SK-N-SH (cell line): ENCODE measurements at regions of chr2 and their contacts with region 1.

Region 1: DNA sequence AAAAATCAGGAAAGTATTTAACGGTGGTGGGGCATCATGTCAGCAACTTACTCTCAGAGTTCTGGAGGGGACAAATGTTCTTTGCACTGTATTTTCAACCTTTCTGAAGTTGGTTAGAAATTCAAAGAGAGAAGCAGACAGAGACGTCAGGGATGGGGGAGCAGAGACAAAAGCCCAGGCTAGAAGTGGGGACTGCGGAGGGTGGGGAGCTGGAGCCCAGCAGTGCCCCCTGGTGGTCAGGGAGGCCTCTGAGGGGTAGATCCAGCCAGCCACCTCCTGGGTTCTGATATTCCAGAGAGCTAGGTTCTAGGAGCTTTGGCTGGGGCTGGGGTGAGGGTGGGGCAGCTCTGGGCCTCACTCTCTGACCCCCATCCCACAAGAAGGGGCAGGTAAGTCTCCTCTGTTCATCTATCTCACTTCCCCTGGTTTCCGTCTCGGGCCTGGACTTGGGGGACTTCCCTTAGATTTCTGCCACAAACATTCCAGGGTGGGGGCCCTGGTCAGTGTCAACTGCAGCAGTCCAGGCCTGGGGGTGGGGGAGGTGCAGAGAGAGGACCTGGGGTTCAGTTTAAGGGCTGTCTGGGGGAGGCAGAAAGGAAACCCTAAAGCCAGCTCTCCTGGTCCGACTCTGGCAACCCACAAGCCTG is 8.9 kb downstream of the TNS1 start:
- DNase-seq: peak; percentile 85
- H3K4me3 ChIP-seq: peak overlapping the region in 1 of 2 experiments; percentile 38; a peak in 1 of 4 replicates
- H3K27ac ChIP-seq: peak overlapping the region in 1 of 2 experiments; percentile 94; a peak in 2 of 4 replicates
- H3K4me1 ChIP-seq: peaks cover 25 to 42% of the 10 kb centered on the region in 2 experiments; a peak in 3 of 4 replicates
- H3K27me3 ChIP-seq: no peaks in the 10 kb centered on the region
- CTCF ChIP-seq: peak; percentile 85
- EP300 ChIP-seq: no peak
- RAD21 ChIP-seq: peak; percentile 57

Region 2: GRCh38 chr2:217510771-217511291 is 483.1 kb before region 1 on chr2:
- CTCF ChIA-PET with region 1: no interaction called
- POLR2A ChIA-PET with region 1: no interaction called
- DNase-seq: peak; percentile 78
- H3K4me3 ChIP-seq: no peak overlapping the region; a peak in 1 of 4 replicates
- H3K27ac ChIP-seq: peak overlapping the region in 1 of 2 experiments; percentile 48; a peak in 1 of 4 replicates
- H3K4me1 ChIP-seq: peaks cover 8 to 11% of the 10 kb centered on the region in 2 experiments; a peak in 3 of 4 replicates
- H3K27me3 ChIP-seq: no peaks in the 10 kb centered on the region
- CTCF ChIP-seq: peak; percentile 77
- EP300 ChIP-seq: no peak
- RAD21 ChIP-seq: peak; percentile 99

Region 3: DNA sequence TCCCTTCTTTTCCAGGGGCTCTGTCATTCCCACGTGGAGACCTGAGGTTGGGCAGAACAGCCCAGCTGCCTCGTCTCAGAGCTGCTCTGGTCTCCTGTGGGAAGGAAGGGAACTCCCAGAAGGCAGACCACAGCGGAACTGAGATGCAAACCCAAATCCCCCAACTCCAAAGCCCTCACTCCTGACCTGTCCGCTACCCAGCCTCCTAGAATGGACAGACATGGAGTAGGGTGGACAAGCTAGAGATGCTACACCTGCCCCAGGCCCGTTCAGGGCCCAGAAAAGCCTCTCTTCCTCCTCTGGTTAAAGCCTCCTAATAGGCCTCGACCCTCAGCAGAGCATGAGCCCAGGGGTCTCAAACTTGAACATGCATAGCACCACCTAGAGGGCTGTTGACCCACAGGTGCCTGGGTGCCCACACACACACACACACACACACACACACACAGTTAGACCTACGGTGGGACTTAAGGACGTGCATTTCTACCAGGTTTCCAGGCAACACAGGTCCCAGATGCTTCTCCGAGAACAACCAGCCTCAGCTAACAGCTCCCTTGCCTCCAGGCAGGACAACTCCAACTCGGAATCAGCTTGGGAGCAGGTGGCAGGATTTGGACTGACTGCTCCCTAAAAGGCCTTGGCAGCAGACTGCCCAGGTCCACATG is 84.7 kb before region 1 on chr2:
- CTCF ChIA-PET with region 1: interaction called, 13 read pairs
- POLR2A ChIA-PET with region 1: no interaction called
- DNase-seq: peak; percentile 61
- H3K4me3 ChIP-seq: no peak overlapping the region
- H3K27ac ChIP-seq: peak overlapping the region in 1 of 2 experiments; percentile 76; a peak in 2 of 4 replicates
- H3K4me1 ChIP-seq: peaks cover 19 to 78% of the 10 kb centered on the region in 2 experiments; a peak in 2 of 4 replicates
- H3K27me3 ChIP-seq: no peaks in the 10 kb centered on the region
- CTCF ChIP-seq: peak; percentile 16
- EP300 ChIP-seq: no peak
- RAD21 ChIP-seq: peak; percentile 16; the same call in 1 of the 2 replicates

Region 4: GRCh38 chr2:217934321-217935131 is 59.4 kb before region 1 on chr2:
- CTCF ChIA-PET with region 1: interaction called, 129 read pairs
- POLR2A ChIA-PET with region 1: no interaction called
- DNase-seq: no peak
- H3K4me3 ChIP-seq: 0 out of 4 replicates have a peak overlapping the region, but pooled peaks of 1 of the 2 experiments have one; percentile 15
- H3K27ac ChIP-seq: peak overlapping the region; percentile 86 to 96
- H3K4me1 ChIP-seq: peaks cover 75 to 94% of the 10 kb centered on the region in 2 experiments
- H3K27me3 ChIP-seq: no peaks in the 10 kb centered on the region
- CTCF ChIP-seq: no peak
- EP300 ChIP-seq: peak in 1 of 2 experiments; percentile 80; a peak in 1 of 4 replicates
- RAD21 ChIP-seq: no peak

Region 5: DNA sequence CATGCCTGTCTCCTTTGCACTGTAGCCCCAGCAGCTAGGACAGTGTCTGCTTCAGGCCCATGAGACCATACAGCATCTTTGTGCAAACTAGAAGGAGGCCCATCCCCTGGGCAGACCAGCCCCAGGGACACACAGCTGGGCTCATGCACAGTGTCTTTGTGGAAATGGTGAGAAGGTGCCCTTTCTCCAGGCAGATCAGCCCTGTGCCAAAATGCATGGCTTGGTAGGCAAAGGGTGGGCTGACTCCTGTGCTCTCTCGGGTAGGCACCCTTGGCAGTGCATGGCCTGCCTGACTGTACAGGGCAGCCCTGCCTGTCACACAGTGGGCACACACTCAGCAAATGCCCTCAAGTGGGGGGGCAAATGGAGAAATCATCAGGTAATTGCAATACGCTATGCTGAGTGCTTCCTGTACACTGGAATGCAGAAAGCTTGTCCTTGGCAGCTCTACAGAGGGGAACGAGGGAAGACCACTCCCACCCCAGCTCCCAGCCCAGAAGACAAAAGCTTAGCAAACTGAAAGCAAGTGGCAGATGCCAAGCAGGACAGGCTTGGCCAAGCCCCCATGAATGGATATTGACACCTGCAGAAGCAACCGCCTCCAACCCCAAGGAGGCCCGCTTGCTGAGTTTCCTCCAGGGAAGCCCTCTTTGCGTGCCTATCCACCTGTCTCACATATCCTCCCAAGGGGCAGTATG is 12.7 kb before region 1 on chr2:
- CTCF ChIA-PET with region 1: interaction called, 12 read pairs
- POLR2A ChIA-PET with region 1: no interaction called
- DNase-seq: no peak
- H3K4me3 ChIP-seq: no peak overlapping the region
- H3K27ac ChIP-seq: no peak overlapping the region
- H3K4me1 ChIP-seq: peaks cover 0 to 3% of the 10 kb centered on the region in 2 experiments; a peak in 1 of 4 replicates
- H3K27me3 ChIP-seq: no peaks in the 10 kb centered on the region
- CTCF ChIP-seq: no peak
- EP300 ChIP-seq: no peak
- RAD21 ChIP-seq: no peak

Region 6: GRCh38 chr2:218010140-218010983 is 16.4 kb after region 1 on chr2:
- CTCF ChIA-PET with region 1: interaction called, 12 read pairs
- POLR2A ChIA-PET with region 1: no interaction called
- DNase-seq: peak; percentile 91
- H3K4me3 ChIP-seq: peak overlapping the region; percentile 76 to 95
- H3K27ac ChIP-seq: peak overlapping the region in 1 of 2 experiments; percentile 72; a peak in 3 of 4 replicates
- H3K4me1 ChIP-seq: peaks cover 51 to 69% of the 10 kb centered on the region in 2 experiments
- H3K27me3 ChIP-seq: no peaks in the 10 kb centered on the region
- CTCF ChIP-seq: peak; percentile 63
- EP300 ChIP-seq: no peak
- RAD21 ChIP-seq: peak; percentile 53

Region 7: DNA sequence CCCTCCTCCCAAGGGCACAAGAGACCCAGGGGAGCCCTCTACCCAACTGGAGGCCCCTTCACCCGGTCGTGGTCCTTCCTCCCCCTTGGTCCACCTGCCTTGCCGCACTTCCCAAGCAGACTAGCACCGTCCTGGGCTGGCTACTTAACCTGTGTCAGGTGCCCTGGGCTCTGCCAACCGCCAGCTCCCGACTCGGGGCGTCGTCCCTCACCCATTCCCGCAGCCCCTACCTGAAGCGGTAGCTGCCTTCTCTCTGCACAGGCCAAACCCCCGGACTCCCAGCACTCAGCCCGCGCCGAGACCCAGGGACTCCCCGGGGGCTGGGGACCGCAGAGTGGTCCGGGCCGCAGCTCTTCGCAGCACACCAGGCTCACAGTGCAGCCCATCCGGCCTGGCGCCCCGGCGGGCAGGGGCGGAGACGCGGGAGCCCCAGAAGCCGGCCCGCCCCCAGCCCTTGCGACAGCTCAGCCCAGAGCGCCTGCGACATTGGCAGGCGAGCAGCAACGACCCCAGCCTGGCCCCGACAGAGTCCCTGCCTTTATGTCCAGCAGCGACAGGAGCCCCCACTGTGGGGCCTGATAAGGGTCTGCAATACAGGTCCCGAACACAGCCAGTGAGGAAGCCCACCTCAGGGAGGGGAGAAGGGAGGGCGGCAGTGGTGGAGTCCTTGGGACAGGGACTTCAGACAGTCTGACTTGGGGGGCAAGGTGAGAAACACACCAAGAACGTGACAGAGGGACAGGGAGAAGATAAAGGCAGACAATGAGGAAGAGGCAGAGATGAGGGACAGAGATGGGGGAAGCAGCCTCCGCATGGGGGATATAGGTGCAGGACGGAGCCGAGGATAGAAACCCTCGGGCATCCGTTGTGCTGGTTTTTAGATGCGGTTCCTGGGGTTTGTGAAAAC is 39.9 kb after region 1 on chr2:
- CTCF ChIA-PET with region 1: interaction called, 54 read pairs
- POLR2A ChIA-PET with region 1: no interaction called
- DNase-seq: no peak
- H3K4me3 ChIP-seq: no peak overlapping the region
- H3K27ac ChIP-seq: no peak overlapping the region
- H3K4me1 ChIP-seq: peaks cover 0 to 24% of the 10 kb centered on the region in 2 experiments; a peak in 1 of 4 replicates
- H3K27me3 ChIP-seq: no peaks in the 10 kb centered on the region
- CTCF ChIP-seq: no peak
- EP300 ChIP-seq: no peak
- RAD21 ChIP-seq: no peak